Activated naive CD4-positive, alpha-beta T cell treated with anti-CD3 and anti-CD28 coated beads for 36 hours (primary cell): ENCODE measurements at regions of chr5 and their contacts with region 1.

Region 1: DNA sequence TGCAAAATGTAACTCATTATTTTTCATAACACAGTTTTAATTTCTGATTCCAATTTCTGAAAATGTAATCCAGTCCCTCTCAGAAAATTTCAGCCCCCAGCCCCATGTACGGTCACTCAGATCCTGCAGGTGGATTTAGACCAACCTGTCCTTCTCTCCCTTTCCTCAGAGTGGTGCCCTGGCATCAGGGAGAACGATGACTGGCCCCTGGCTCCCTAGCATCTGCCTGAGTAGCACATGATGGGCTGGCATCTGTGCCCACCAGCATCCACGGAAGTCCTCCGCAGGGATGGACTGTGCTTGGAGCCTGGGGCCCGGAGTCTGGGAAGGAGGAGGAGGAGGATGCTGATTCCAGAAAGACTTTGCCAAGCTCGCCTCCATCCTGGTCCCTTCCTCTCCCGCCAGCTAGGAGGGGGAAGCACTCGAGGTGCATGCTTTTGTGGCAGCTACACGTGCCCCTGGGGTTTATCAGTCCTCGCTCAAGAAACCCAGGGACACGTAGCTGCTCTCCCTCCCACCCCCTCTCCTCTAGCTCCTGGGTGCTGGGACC is 54.4 kb upstream of the RUFY1 start:
- DNase-seq: peak; percentile 20
- H3K4me3 Mint-ChIP-seq: no peak overlapping the region
- H3K27ac Mint-ChIP-seq: no peak overlapping the region
- H3K4me1 Mint-ChIP-seq: no peaks in the 10 kb centered on the region
- H3K27me3 Mint-ChIP-seq: no peaks in the 10 kb centered on the region

Region 2: GRCh38 chr5:178793151-178793550 is 702.8 kb before region 1 on chr5:
- CTCF ChIA-PET with region 1: no interaction called
- intact Hi-C with region 1: loop called (anchors 2 kb)
- DNase-seq: peak; percentile 53
- H3K4me3 Mint-ChIP-seq: no peak overlapping the region
- H3K27ac Mint-ChIP-seq: no peak overlapping the region
- H3K4me1 Mint-ChIP-seq: no peaks in the 10 kb centered on the region
- H3K27me3 Mint-ChIP-seq: peaks cover 5% of the 10 kb centered on the region

Region 3: DNA sequence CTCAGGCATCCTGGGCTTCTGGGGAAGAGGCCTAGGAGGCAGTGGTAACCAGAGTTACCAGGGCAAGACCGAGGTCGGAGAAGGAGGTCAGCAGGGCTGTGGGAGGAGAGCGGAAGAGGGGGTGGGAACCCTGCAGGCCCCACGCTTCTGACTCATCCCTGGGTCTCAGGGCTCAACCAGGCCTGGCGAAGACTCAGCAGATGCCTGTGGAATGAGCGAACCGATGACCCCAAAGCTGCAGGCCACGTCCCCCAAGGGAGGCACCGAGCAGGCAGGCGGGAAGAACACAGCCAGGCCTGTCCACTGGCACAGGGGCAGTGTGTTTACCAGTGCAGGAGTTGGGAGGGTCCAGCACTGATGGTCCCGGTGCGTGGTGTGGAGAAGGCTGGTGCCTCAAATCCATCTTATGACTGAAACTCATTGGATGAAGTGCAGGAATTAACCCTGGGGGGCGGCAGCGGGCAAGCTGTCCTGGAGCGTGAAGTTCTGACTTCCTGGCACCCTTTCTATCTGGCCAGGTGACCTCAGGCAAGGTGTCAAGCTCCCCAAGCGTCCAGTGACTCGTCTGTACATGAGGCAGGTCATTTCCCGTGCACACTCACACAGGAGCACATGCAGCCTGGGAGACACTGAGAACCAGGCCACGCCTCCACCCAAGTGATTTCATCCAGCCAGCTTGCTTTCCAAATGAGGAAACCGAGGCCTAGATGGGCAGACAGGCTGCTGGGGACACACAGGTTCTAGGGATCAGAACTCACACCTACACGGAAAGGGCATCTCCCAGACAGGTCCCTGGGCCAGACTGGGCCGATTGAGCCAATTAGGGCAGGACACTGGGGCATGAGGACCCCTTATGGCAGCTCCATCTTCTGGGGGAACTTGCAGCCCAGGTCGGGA is 219.8 kb before region 1 on chr5:
- CTCF ChIA-PET with region 1: no interaction called
- intact Hi-C with region 1: no loop called
- DNase-seq: no peak
- H3K4me3 Mint-ChIP-seq: no peak overlapping the region
- H3K27ac Mint-ChIP-seq: no peak overlapping the region
- H3K4me1 Mint-ChIP-seq: no peaks in the 10 kb centered on the region
- H3K27me3 Mint-ChIP-seq: no peaks in the 10 kb centered on the region

Region 4: GRCh38 chr5:180084688-180085561 is 588.9 kb after region 1 on chr5:
- CTCF ChIA-PET with region 1: no interaction called
- intact Hi-C with region 1: no loop called
- DNase-seq: no peak
- H3K4me3 Mint-ChIP-seq: no peak overlapping the region
- H3K27ac Mint-ChIP-seq: no peak overlapping the region
- H3K4me1 Mint-ChIP-seq: peaks cover 33% of the 10 kb centered on the region
- H3K27me3 Mint-ChIP-seq: peaks cover 16% of the 10 kb centered on the region